ENCODE measurements at regions of chrX and their contacts with region 1.

Region 1: GRCh38 chrX:74291964-74292807 is 11.8 kb upstream of the ZCCHC13 start:
- DNase-seq: peak; percentile 71 to 94 (median 78)
- ATAC-seq: peak; percentile 83
- H3K4me3 ChIP-seq: peak overlapping the region; percentile 78
- H3K4me3 Mint-ChIP-seq: peak overlapping the region; percentile 98
- H3K27ac ChIP-seq: peak overlapping the region; percentile 80 to 85
- H3K27ac Mint-ChIP-seq: peak overlapping the region; percentile 98
- H3K4me1 ChIP-seq: peaks cover 18% of the 10 kb centered on the region
- H3K4me1 Mint-ChIP-seq: peaks cover 20% of the 10 kb centered on the region
- H3K27me3 ChIP-seq: no peaks in the 10 kb centered on the region
- H3K27me3 Mint-ChIP-seq: no peaks in the 10 kb centered on the region
- CTCF ChIP-seq: no peak

Region 2: DNA sequence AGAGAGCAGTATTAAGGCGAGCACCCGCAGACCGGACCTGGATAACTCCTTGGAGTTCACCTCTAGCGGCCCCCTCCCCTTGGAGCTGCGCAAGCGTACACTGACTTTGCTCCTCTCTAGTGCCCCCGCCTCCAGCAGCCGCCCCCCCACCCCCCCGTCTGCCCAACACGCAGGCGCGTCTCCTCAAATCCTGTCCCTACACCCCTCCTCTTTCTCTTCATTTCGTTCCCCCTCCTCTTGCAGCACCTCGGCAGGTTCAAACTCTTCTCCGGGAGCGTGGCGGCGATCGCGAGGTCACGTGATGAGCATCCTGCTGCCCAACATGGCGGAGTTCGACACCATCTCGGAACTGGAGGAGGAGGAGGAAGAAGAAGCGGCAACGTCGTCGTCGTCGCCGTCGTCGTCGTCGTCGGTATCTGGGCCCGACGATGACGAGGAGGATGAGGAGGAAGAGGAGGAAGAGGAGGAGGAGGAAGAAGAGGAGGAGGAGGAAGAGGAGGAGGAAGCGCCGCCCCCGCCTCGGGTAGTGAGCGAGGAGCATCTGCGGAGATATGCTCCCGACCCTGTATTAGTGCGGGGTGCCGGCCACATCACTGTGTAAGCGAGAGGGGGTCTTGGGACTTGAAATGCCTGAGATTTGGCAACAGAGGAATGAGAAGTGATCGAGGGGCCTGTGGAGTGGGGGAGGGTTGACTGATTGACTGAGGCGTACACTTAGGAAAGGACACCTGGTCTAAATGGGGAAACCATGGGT is 729.0 kb before region 1 on chrX and contains the start of gene CHIC1:
- CTCF ChIA-PET with region 1: no interaction called
- POLR2A ChIA-PET with region 1: no interaction called
- intact Hi-C with region 1: loop called in 1 of 2 experiments (anchors 10 kb)
- DNase-seq: peak; percentile 48 to 89 (median 64)
- ATAC-seq: peak; percentile 73
- H3K4me3 ChIP-seq: peak within 1 kb of the TSS; percentile 74
- H3K4me3 Mint-ChIP-seq: peak within 1 kb of the TSS; percentile 96
- H3K27ac ChIP-seq: peak within 1 kb of the TSS; percentile 78 to 94
- H3K27ac Mint-ChIP-seq: peak within 1 kb of the TSS; percentile 96
- H3K4me1 ChIP-seq: peaks cover 6% of the 10 kb centered on the region
- H3K4me1 Mint-ChIP-seq: peaks cover 31% of the 10 kb centered on the region
- H3K27me3 ChIP-seq: no peaks in the 10 kb centered on the region
- H3K27me3 Mint-ChIP-seq: no peaks in the 10 kb centered on the region
- CTCF ChIP-seq: no peak
- total RNA-seq, gene CHIC1: 7.0 to 7.2 TPM

Region 3: DNA sequence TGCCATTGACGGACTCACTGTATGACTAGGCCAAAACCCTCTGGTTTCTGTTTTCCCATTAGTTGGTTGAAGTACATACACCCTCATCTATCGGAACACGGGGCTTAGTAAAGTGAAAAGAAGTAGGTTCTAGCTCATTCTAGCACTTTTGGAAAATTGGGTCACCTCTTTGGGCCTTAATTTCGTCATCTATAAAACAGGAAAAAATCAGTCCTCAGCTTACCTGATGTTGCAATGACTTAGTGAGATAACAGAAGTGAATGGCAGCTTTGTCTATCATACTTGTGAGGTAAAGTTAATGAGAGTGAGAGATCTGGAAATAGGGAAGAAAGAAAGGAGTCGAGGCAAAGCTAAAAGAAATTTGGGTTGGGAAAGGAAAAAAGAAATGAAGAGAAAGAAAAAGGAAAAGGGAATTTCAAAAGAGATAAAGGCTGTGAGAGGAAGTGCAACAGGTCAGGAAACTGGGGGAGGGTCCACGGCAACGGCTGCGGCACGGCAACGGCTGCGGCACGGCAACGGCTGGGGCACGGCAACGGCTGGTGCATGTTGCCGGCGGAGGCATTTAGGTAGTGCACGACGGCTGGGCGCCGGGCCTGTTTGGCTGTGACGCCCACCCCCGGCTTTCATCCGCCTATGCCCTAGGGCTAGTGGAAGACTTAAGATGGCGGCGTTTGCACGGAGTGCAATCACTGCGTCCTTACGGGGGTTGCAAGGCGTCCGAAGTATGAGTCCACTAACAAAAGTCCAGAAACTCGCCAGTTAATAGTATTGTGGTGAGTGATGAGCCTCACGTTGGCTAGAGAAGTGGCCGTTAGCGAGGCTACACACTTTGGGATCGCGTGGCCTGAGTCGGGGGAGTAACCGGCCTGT is 348.3 kb before region 1 on chrX:
- CTCF ChIA-PET with region 1: no interaction called
- POLR2A ChIA-PET with region 1: interaction called, 7 read pairs
- intact Hi-C with region 1: loop called in 1 of 2 experiments (anchors 10 kb)
- DNase-seq: peak; percentile 70 to 91 (median 84)
- ATAC-seq: peak; percentile 99
- H3K4me3 ChIP-seq: peak overlapping the region; percentile 81
- H3K4me3 Mint-ChIP-seq: peak overlapping the region; percentile 88
- H3K27ac ChIP-seq: peak overlapping the region; percentile 64 to 78
- H3K27ac Mint-ChIP-seq: peak overlapping the region; percentile 96
- H3K4me1 ChIP-seq: peaks cover 10% of the 10 kb centered on the region
- H3K4me1 Mint-ChIP-seq: peaks cover 29% of the 10 kb centered on the region
- H3K27me3 ChIP-seq: no peaks in the 10 kb centered on the region
- H3K27me3 Mint-ChIP-seq: no peaks in the 10 kb centered on the region
- CTCF ChIP-seq: no peak

Region 4: GRCh38 chrX:74614093-74614909 is 322.1 kb after region 1 on chrX and contains the start of gene RLIM:
- CTCF ChIA-PET with region 1: no interaction called
- POLR2A ChIA-PET with region 1: interaction called, 21 read pairs
- intact Hi-C with region 1: loop called (anchors 2 to 5 kb)
- DNase-seq: peak; percentile 83 to 97 (median 88)
- ATAC-seq: peak; percentile 88
- H3K4me3 ChIP-seq: peak within 1 kb of the TSS; percentile 90
- H3K4me3 Mint-ChIP-seq: peak within 1 kb of the TSS; percentile 99
- H3K27ac ChIP-seq: peak within 1 kb of the TSS; percentile 95 to 100
- H3K27ac Mint-ChIP-seq: peak within 1 kb of the TSS; percentile 95
- H3K4me1 ChIP-seq: peaks cover 6% of the 10 kb centered on the region
- H3K4me1 Mint-ChIP-seq: peaks cover 25% of the 10 kb centered on the region
- H3K27me3 ChIP-seq: no peaks in the 10 kb centered on the region
- H3K27me3 Mint-ChIP-seq: no peaks in the 10 kb centered on the region
- CTCF ChIP-seq: no peak
- total RNA-seq, gene RLIM: 71.0 to 73.6 TPM

Measured in CD4-positive, alpha-beta T cell (primary cell).